Heart right ventricle (tissue), 16 donors: ENCODE measurements at regions of chr2 and their contacts with region 1.

Region 1: GRCh38 chr2:230824406-230824978 is 40.2 kb upstream of the ITM2C start:
- DNase-seq: peak in 1 of 2 donors; percentile 76
- ATAC-seq: peak; percentile 55 to 79 (median 74)
- H3K4me3 ChIP-seq: peak overlapping the region in 5 of 10 donors; percentile 24 to 36 (median 34)
- H3K27ac ChIP-seq: no peak overlapping the region
- H3K4me1 ChIP-seq: peaks cover 0 to 23% (median 11%) of the 10 kb centered on the region in 9 donors
- H3K27me3 ChIP-seq: peaks cover 9 to 45% (median 36%) of the 10 kb centered on the region in 7 donors
- CTCF ChIP-seq: peak; percentile 62 to 81 (median 77)

Region 2: DNA sequence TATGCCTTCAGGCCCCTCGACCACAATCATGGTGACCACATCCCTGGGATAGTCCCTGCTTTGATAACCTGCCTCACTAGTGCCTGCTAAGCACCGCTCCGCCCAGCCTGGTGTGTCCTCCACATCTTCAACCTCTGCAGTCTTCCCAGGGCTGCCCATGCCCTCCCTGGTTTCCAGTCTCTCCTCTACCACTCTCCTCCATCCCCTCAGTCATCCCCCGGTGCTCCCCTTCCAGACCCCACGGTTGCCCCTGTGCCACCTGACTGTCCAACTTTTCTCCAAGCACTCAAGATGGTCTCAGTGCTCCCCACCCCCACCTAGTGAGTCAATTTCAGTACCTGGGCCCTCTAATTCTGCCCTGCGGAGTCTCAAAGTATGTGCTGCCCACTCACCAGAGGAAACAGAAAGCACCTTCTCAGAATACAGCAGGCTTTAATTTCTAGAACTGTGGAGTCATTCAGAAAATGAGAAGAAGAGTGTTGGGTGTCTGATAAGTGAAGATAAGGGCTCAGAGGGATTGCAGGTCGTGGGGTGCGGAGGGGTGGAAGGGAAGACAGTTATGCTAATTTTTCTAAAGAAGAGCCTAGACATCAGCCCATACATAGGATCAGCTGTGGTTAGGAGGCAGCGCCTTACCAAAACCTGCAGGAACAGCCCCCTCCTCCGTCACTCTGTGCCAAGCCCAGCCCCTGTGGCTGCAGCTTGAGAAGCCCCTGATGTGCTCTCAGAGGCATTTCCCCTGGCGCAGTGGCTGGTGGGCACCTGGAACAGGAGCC is 165.4 kb before region 1 on chr2:
- intact Hi-C with region 1: no loop called
- DNase-seq: no peak
- ATAC-seq: no peak
- H3K4me3 ChIP-seq: peak overlapping the region in 1 of 10 donors; percentile 12
- H3K27ac ChIP-seq: peak overlapping the region in 4 of 10 donors; percentile 25 to 91 (median 42)
- H3K4me1 ChIP-seq: peaks cover 0 to 73% (median under 1%) of the 10 kb centered on the region in 9 donors
- H3K27me3 ChIP-seq: no peaks in the 10 kb centered on the region
- CTCF ChIP-seq: no peak

Region 3: DNA sequence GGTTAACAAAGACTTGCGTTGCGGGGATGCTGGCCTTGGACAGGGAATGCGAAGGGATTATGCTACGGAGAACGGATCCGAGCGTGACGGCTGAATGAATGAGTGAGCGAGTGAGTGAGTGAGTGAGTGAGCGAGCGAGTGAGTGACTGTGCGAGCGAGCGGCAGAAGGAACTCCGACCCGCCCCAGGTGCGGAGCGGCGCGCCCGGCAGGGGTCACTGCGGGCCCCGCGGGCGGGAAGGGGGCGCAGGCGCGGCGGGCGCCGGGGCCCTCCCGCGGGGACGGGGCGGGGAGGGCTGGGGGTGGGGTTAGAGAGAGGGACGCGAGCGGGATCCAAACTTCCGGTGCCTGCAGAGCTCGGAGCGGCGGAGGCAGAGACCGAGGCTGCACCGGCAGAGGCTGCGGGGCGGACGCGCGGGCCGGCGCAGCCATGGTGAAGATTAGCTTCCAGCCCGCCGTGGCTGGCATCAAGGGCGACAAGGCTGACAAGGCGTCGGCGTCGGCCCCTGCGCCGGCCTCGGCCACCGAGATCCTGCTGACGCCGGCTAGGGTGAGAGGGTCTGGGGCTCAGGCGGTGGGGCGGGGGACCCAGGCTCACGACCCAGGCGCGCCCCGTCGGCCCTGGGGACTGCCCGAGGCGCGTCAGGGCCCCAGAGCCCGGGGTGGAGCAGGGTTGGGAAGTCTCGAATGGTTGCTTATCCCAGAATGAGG is 40.3 kb after region 1 on chr2 and contains the start of gene ITM2C:
- intact Hi-C with region 1: no loop called
- DNase-seq: peak; percentile 52 to 73
- ATAC-seq: peak; percentile 75 to 93 (median 80)
- H3K4me3 ChIP-seq: peak within 1 kb of the TSS; percentile 37 to 84 (median 70)
- H3K27ac ChIP-seq: peak within 1 kb of the TSS in 5 of 10 donors; percentile 11 to 68 (median 43)
- H3K4me1 ChIP-seq: peaks cover 4 to 55% (median 32%) of the 10 kb centered on the region in 9 donors
- H3K27me3 ChIP-seq: peaks cover 6 to 56% (median 39%) of the 10 kb centered on the region in 7 donors
- CTCF ChIP-seq: peak in 7 of 9 donors; percentile 13 to 63 (median 42)
- total RNA-seq, gene ITM2C: 14.3 to 32.7 (median 23.8) TPM

Region 4: GRCh38 chr2:230987137-230988020 is 162.9 kb after region 1 on chr2:
- intact Hi-C with region 1: loop called (anchors 1 to 5 kb)
- DNase-seq: peak; percentile 69 to 83
- ATAC-seq: peak; percentile 70 to 92 (median 89)
- H3K4me3 ChIP-seq: peak overlapping the region in 9 of 10 donors; percentile 1 to 45 (median 40)
- H3K27ac ChIP-seq: no peak overlapping the region
- H3K4me1 ChIP-seq: peaks cover 0 to 6% (median 4%) of the 10 kb centered on the region in 9 donors
- H3K27me3 ChIP-seq: peaks cover 14 to 50% (median 40%) of the 10 kb centered on the region in 7 donors
- CTCF ChIP-seq: peak; percentile 89 to 97 (median 95)

Region 5: DNA sequence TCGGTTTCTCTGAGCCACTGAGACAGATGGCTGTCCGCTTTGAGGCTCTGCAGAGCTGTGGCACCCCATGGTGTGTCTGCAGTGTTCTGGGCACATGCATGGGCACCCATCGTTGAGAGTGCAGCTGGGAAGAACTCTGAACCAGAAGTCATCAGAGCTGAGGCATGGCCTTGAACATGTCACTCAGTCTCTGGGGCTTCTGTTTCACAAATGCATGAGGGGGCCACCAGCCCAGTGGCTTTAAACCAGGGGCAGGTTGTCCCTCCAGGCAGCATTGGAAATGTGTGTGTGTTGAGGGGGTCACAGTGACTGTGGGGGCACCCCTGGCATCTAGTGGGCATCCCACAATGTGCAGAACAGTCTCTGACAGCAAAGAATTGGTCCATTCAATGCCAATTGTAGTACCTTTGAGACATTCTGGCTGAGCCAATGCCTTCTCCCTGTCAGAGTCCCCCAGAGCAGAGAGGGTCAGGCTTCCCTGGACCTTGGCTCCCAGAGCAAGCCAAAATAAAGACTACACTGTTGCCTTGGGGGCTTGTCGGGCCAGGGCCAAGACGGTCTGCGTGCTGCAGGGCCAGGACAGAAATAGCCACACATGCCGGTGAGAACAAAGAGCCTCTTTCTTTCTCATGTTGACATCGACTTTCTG is 222.9 kb after region 1 on chr2:
- intact Hi-C with region 1: loop called in 6 of 10 experiments (anchors 5 to 10 kb)
- DNase-seq: no peak
- ATAC-seq: no peak
- H3K4me3 ChIP-seq: no peak overlapping the region
- H3K27ac ChIP-seq: no peak overlapping the region
- H3K4me1 ChIP-seq: peaks cover 0 to 5% (median 3%) of the 10 kb centered on the region in 9 donors
- H3K27me3 ChIP-seq: peaks cover 0 to 30% (median 0%) of the 10 kb centered on the region in 7 donors
- CTCF ChIP-seq: no peak

Region 6: DNA sequence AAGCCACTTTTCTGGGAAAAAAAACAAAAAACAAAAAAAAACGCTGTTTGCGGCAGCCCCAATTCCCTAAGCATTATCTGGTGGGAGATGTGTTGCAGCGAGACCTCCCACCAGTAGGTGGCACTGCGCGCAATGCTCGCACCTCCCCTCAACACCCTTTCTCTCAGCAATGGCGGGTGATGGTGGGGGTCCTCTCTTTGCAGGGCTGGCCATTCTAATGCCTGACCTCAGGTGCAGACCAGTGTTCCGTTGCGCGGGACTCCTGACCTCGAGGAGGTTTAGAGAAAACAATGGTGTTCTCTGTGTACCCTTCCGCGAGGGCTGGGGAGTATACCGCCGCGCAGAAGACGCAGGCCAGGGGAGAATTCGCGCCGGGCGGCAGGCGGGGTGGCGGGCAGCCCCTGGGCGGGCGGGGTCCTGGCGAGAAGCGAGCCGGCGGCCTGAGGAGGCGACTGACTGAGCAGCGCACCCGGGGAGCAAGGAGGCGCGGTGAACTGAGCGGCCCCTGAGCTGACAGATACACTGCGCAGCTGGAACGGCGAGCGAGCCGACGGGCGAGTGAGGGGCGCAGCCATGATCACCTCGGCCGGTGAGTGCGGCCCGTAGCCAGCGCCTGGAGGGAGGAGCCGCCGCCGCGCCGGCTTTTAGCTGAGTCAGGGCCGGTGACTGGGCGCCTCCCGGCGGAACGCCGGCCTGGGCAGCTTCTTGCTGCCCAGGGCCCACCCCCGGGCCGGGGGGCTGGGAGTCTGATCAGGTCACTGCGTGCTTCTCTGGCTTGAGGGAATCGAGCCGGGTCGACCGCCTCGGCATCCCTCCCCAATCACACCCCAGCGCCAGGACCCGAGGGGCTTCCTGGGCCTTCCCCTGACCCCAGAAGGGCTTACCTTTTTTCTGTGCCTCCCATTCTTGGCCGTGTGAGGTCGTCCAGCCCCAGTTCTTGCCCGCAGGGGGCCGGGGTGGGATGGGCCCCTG is 232.2 kb after region 1 on chr2 and contains the start of gene PSMD1:
- intact Hi-C with region 1: loop called in 5 of 10 experiments (anchors 5 to 10 kb)
- DNase-seq: peak; percentile 92 to 96
- ATAC-seq: peak; percentile 89 to 95 (median 92)
- H3K4me3 ChIP-seq: peak within 1 kb of the TSS; percentile 69 to 100 (median 97)
- H3K27ac ChIP-seq: peak within 1 kb of the TSS; percentile 88 to 98 (median 95)
- H3K4me1 ChIP-seq: peaks cover 20 to 52% (median 34%) of the 10 kb centered on the region in 9 donors
- H3K27me3 ChIP-seq: no peaks in the 10 kb centered on the region
- CTCF ChIP-seq: peak; percentile 87 to 99 (median 97)
- total RNA-seq, gene PSMD1: 88.4 to 113 (median 95.1) TPM

Region 7: DNA sequence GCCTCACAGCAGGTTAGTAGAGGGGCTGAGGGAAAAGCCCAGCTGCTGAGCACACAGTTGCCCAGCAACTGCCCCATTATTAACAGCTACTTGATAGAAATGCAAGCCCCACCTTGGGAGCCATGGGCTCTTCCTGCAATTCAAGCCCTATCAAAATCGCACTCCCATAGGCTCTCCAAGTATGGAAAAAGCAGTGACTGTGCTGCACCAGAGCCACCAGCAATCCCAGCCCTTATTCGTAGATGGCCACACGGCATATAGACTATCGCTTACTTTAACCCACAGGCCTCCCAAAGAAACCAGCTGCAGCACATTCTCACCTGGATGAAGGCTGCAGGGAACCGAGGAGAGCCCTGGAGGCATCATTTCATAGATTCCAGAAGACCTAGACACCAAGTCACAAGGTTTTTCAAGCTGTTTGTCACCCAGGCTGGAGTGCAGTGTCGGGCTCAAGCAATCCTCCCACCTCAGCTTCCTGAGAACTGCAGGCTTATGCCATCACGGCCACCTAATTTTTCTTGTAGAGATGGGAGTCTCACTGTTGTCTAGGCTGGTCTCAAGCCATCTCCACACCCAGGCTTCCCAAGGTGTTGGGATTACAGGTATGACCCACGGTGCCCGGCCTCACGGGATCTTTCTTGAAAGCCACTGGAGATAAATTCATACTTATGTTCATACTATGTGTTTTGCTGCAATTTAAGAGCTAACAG is 628.5 kb after region 1 on chr2:
- intact Hi-C with region 1: loop called in 1 of 10 experiments (anchors 5 kb)
- DNase-seq: no peak
- ATAC-seq: peak in 3 of 8 donors; percentile 9 to 14 (median 11)
- H3K4me3 ChIP-seq: no peak overlapping the region
- H3K27ac ChIP-seq: no peak overlapping the region
- H3K4me1 ChIP-seq: peaks cover 0 to 3% (median 0%) of the 10 kb centered on the region in 9 donors
- H3K27me3 ChIP-seq: no peaks in the 10 kb centered on the region
- CTCF ChIP-seq: no peak